B cell (primary cell): ENCODE measurements at regions of chr17 and their contacts with region 1.

Region 1: DNA sequence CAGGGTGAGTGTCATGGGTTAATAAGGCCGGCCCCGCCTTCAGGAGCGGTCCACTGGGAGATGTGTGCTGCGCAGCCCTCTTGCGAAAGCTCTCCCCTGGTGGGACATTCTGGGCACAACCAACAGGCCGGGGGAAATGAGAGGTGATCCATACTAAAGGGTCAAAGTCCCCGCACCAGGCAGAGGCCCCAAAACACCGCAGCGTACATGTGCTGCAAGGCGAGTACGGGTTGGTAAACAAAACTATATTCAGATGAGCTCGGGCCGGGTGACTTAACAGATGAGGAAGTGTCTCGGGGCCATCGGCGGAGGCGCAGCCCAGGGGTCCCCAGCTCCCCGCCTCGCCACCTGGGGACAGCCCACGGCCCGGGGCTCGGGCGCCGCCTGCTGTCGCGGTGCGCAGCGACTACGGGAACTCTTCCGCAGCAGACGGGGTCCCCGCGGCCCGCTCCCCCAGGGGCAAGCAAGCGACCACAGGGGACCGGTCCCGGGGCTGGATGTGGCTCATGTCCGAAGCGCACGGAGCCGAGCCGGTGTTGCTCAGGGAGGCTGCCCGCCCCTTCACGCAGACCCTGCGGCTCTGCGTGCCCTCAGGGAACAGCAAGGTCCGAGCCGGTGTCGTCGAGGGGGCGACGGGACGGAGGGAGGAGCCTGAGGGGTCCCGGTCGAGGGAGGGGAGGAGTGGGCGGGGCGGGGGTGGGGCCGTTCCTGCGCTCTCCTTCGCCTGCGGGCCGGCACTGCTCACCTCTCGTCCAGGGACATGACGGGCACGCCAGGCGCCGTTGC is at the start of gene RAB37:
- DNase-seq: peak; percentile 91
- ATAC-seq: peak; percentile 76
- H3K4me3 ChIP-seq: peak within 1 kb of the TSS; percentile 38 to 91 (median 75)
- H3K4me3 Mint-ChIP-seq: peak within 1 kb of the TSS; percentile 87
- H3K27ac ChIP-seq: peak within 1 kb of the TSS; percentile 52 to 74
- H3K27ac Mint-ChIP-seq: peak within 1 kb of the TSS; percentile 98
- H3K4me1 ChIP-seq: peaks cover 40 to 58% of the 10 kb centered on the region in 2 donors
- H3K4me1 Mint-ChIP-seq: peaks cover 42% of the 10 kb centered on the region
- H3K27me3 ChIP-seq: peaks cover 0 to 3% (median 0%) of the 10 kb centered on the region in 4 experiments
- H3K27me3 Mint-ChIP-seq: no peaks in the 10 kb centered on the region
- CTCF ChIP-seq: peak; percentile 68
- total RNA-seq, gene RAB37: 76.0 and 76.8 TPM in 2 replicates

Region 2: DNA sequence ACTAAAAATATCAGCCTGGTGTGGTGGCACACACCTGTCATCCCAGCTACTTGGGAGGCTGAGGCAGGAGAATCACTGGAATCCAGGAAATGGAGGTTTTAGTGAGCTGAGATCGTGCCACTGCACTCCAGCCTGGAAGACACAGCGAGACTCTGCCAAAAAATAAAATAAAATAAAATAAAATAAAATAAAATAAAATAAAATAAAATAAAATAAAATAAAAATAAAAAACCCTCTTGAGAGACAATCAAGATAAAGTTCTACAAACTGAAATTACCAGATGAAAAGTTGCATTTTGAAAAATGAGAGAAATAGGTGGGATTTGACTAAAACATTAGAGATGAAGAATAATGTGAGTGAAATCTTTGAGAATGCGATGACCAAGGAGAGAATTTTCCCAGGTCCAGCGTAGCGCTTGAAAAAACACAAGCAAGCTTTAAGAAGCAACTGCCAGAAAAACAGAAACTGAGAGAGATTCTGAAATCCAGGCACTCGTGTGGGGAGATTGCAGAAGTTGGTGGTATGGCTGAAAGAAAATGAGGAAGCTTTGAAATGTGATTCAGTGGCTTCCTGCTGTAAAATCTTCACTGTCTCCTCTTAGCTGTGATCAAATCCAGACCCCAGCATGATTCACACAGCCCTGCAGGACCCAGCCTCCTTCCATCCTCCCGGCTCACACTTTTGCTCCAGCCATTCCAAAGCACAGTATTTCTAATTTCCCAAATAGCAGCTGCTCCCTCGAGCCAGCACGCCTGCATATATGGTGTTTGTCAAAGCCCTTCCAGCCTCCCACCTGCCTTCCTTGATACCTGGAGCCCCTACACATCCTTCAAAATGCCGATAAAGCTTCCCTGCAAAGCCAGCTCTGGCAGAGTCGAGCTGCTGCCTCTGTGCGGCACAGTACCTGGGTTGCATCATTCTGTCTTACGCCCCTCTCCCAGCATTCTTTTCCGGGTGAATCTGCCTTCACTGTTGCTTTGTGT is 104.9 kb before region 1 on chr17:
- CTCF ChIA-PET with region 1: interaction called, 16 read pairs
- POLR2A ChIA-PET with region 1: no interaction called
- intact Hi-C with region 1: no loop called
- DNase-seq: peak; percentile 76
- ATAC-seq: peak; percentile 76
- H3K4me3 ChIP-seq: peak overlapping the region in 1 of 5 experiments; percentile 29
- H3K4me3 Mint-ChIP-seq: peak overlapping the region; percentile 57
- H3K27ac ChIP-seq: no peak overlapping the region
- H3K27ac Mint-ChIP-seq: peak overlapping the region; percentile 53
- H3K4me1 ChIP-seq: peaks cover 45 to 46% of the 10 kb centered on the region in 2 donors
- H3K4me1 Mint-ChIP-seq: peaks cover 47% of the 10 kb centered on the region
- H3K27me3 ChIP-seq: peaks cover 0 to 12% (median 2%) of the 10 kb centered on the region in 4 experiments
- H3K27me3 Mint-ChIP-seq: peaks cover 11% of the 10 kb centered on the region
- CTCF ChIP-seq: no peak

Region 3: GRCh38 chr17:74690409-74690825 is 46.3 kb before region 1 on chr17:
- CTCF ChIA-PET with region 1: interaction called, 25 read pairs
- POLR2A ChIA-PET with region 1: interaction called, 5 read pairs
- intact Hi-C with region 1: loop called (anchors 2 kb)
- DNase-seq: no peak
- ATAC-seq: no peak
- H3K4me3 ChIP-seq: no peak overlapping the region
- H3K4me3 Mint-ChIP-seq: no peak overlapping the region
- H3K27ac ChIP-seq: no peak overlapping the region
- H3K27ac Mint-ChIP-seq: peak overlapping the region; percentile 37
- H3K4me1 ChIP-seq: peaks cover 22 to 23% of the 10 kb centered on the region in 2 donors
- H3K4me1 Mint-ChIP-seq: peaks cover 30% of the 10 kb centered on the region
- H3K27me3 ChIP-seq: peaks cover 0 to 14% (median 4%) of the 10 kb centered on the region in 4 experiments
- H3K27me3 Mint-ChIP-seq: peaks cover 19% of the 10 kb centered on the region
- CTCF ChIP-seq: no peak

Region 4: GRCh38 chr17:74748529-74749365 is 12.0 kb after region 1 on chr17 and contains the start of gene NHERF1:
- CTCF ChIA-PET with region 1: interaction called, 65 read pairs
- POLR2A ChIA-PET with region 1: interaction called, 43 read pairs
- intact Hi-C with region 1: loop called (anchors 1 kb)
- DNase-seq: peak; percentile 95
- ATAC-seq: peak; percentile 95
- H3K4me3 ChIP-seq: peak within 1 kb of the TSS; percentile 51 to 99 (median 90)
- H3K4me3 Mint-ChIP-seq: peak within 1 kb of the TSS; percentile 91
- H3K27ac ChIP-seq: peak within 1 kb of the TSS; percentile 45 to 80
- H3K27ac Mint-ChIP-seq: peak within 1 kb of the TSS; percentile 82
- H3K4me1 ChIP-seq: peaks cover 43 to 56% of the 10 kb centered on the region in 2 donors
- H3K4me1 Mint-ChIP-seq: peaks cover 58% of the 10 kb centered on the region
- H3K27me3 ChIP-seq: no peaks in the 10 kb centered on the region
- H3K27me3 Mint-ChIP-seq: no peaks in the 10 kb centered on the region
- CTCF ChIP-seq: no peak
- total RNA-seq, gene NHERF1: 69.5 and 81.8 TPM in 2 replicates

Region 5: GRCh38 chr17:74770498-74771318 is 34.0 kb after region 1 on chr17:
- CTCF ChIA-PET with region 1: interaction called, 76 read pairs
- POLR2A ChIA-PET with region 1: interaction called, 18 read pairs
- intact Hi-C with region 1: loop called (anchors 5 kb)
- DNase-seq: peak; percentile 78
- ATAC-seq: peak; percentile 94
- H3K4me3 ChIP-seq: no peak overlapping the region
- H3K4me3 Mint-ChIP-seq: no peak overlapping the region
- H3K27ac ChIP-seq: no peak overlapping the region
- H3K27ac Mint-ChIP-seq: peak overlapping the region; percentile 50
- H3K4me1 ChIP-seq: peaks cover 6 to 7% of the 10 kb centered on the region in 2 donors
- H3K4me1 Mint-ChIP-seq: peaks cover 17% of the 10 kb centered on the region
- H3K27me3 ChIP-seq: no peaks in the 10 kb centered on the region
- H3K27me3 Mint-ChIP-seq: no peaks in the 10 kb centered on the region
- CTCF ChIP-seq: peak; percentile 75

Region 6: GRCh38 chr17:74790161-74791054 is 53.7 kb after region 1 on chr17:
- CTCF ChIA-PET with region 1: interaction called, 15 read pairs
- POLR2A ChIA-PET with region 1: no interaction called
- intact Hi-C with region 1: no loop called
- DNase-seq: no peak
- ATAC-seq: no peak
- H3K4me3 ChIP-seq: no peak overlapping the region
- H3K4me3 Mint-ChIP-seq: no peak overlapping the region
- H3K27ac ChIP-seq: no peak overlapping the region
- H3K27ac Mint-ChIP-seq: no peak overlapping the region
- H3K4me1 ChIP-seq: peaks cover 8 to 24% of the 10 kb centered on the region in 2 donors
- H3K4me1 Mint-ChIP-seq: peaks cover 22% of the 10 kb centered on the region
- H3K27me3 ChIP-seq: no peaks in the 10 kb centered on the region
- H3K27me3 Mint-ChIP-seq: no peaks in the 10 kb centered on the region
- CTCF ChIP-seq: no peak